Lower lobe of right lung (tissue), 2 donors: ENCODE measurements at regions of chr20 and their contacts with region 1.

Region 1: DNA sequence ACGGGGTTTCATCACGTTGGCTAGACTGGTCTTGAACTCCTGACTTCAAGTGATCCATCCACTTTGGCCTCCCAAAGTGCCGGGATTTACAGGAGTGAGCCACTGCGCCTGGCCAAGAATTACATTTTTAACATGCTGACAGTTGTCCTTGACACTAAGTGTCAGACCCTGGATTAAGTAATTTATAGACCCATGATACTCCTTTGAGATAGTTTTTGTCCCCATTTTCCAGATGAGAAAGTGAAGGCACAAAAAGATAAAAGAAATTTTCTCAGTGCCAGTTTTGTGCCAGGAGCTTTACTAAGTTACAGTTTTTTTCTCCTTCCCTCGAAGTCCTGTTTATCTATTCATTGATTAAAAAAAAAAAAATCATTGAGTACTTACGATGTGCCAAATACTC is 9.8 kb upstream of the EDEM2 start:
- DNase-seq: no peak
- ATAC-seq: no peak
- H3K4me3 ChIP-seq: no peak overlapping the region
- H3K27ac ChIP-seq: no peak overlapping the region
- H3K4me1 ChIP-seq: no peaks in the 10 kb centered on the region
- H3K27me3 ChIP-seq: no peaks in the 10 kb centered on the region
- CTCF ChIP-seq: no peak

Region 2: GRCh38 chr20:35200255-35200654 is 43.3 kb after region 1 on chr20:
- intact Hi-C with region 1: loop called (anchors 5 kb)
- DNase-seq: no peak
- ATAC-seq: no peak
- H3K4me3 ChIP-seq: no peak overlapping the region
- H3K27ac ChIP-seq: no peak overlapping the region
- H3K4me1 ChIP-seq: no peaks in the 10 kb centered on the region
- H3K27me3 ChIP-seq: no peaks in the 10 kb centered on the region
- CTCF ChIP-seq: no peak

Region 3: GRCh38 chr20:35490736-35491181 is 333.8 kb after region 1 on chr20:
- intact Hi-C with region 1: no loop called
- DNase-seq: no peak
- ATAC-seq: peak; percentile 90 to 91
- H3K4me3 ChIP-seq: peak overlapping the region; percentile 53
- H3K27ac ChIP-seq: peak overlapping the region; percentile 79
- H3K4me1 ChIP-seq: peaks cover 8% of the 10 kb centered on the region
- H3K27me3 ChIP-seq: no peaks in the 10 kb centered on the region
- CTCF ChIP-seq: no peak